Vagina (tissue), 2 donors: ENCODE measurements at regions of chr17 and their contacts with region 1.

Region 1: DNA sequence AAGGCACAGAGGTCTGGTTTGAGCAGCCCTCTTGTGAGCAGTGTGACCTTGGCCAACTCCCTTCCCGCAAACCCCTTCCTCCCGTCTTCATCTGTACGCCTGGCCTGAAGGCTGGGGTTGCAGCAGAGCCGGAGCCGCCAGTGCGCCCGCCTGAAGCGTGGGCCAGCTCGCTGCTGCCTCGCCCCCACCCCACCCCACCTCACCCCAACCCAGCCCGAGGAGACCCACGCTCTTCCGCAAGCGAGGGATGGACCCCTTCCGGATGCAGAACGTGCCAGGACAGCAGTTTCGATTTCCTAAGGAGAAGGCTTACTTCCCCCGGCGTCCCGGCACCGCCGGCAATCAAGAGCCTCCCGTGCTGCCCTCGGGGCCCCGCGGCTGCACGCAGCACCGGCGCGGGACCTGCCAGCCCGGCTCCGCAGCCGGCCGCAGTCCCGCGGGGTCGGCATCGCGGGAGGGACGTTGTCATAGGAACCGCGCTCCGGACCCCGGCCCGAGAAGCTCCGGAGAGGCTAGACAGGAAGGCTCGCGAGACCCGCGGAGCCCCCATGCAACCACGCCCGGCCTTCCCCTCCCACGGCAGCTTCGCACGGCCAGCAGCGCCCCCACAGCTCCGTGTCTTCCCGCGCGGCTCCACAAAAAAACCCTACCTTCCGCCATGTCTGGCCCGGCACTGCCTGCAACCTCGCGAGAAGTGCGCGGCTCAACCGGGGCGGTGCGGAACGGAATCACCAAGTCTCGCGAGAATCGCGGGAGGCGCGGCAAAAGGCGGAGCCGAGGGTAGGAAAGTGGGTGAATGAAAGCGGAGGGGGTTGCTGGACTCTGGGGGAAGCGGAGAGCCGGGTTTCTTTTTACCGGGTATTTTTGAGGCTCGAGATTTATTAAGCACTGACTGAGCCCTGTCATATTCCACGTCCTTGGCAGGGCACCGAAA is at the start of gene ANKFY1:
- DNase-seq: peak in 1 of 2 donors; percentile 90
- H3K4me3 ChIP-seq: peak within 1 kb of the TSS; percentile 89 to 90
- H3K27ac ChIP-seq: peak within 1 kb of the TSS; percentile 79
- H3K4me1 ChIP-seq: peaks cover 31% of the 10 kb centered on the region
- H3K27me3 ChIP-seq: no peaks in the 10 kb centered on the region
- CTCF ChIP-seq: no peak
- POLR2A ChIP-seq: peak; percentile 27 to 50
- total RNA-seq, gene ANKFY1: 44.2 TPM

Region 2: GRCh38 chr17:4199818-4200402 is 63.6 kb before region 1 on chr17:
- intact Hi-C with region 1: loop called (anchors 2 kb)
- DNase-seq: no peak
- H3K4me3 ChIP-seq: no peak overlapping the region
- H3K27ac ChIP-seq: no peak overlapping the region
- H3K4me1 ChIP-seq: peaks cover 11% of the 10 kb centered on the region
- H3K27me3 ChIP-seq: no peaks in the 10 kb centered on the region
- CTCF ChIP-seq: peak; percentile 8 to 32 (median 20)
- POLR2A ChIP-seq: no peak